CD14-positive monocyte (primary cell): ENCODE measurements at regions of chr17 and their contacts with region 1.

Region 1: DNA sequence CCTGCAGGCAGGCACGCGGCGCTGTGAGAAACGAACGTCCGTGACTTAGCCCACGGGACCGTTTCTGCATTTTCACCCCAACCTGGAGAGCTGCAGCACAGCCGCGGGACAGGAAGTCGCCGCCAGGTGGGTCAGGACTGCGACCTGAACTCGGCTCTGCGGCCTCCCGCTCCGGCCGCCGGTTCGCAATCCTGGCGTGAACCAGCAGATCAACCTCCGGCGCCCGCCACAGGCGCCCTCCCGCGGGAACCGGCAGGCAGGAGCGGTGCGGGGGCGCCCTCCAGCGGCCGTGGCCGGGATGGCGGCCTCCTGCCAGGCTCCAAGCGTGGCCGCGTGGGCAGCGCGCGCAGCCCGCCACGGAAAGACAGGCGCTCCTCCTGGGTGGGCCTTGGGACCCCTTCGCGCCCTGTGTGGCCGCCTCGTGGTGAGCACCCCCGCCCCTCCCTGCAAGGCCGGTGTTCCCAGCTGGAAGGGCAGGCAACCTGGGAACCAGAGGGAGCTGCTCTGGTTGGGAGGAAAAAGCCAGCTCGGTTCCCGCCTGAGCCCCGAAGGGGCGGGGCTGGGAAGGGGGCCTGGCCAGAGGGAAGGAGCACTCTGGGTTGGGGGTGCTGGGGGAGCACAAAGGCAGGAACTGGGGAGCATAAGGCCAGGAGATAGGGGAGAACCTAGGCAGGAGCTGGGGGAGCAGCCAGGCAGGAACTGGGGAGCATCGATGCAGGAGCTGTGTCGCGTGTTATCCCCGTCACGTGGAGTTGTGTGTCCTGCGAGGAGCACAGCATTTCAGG is 28.2 kb downstream of the ACTG1 start:
- DNase-seq: peak; percentile 72 to 78 (median 75)
- H3K4me3 ChIP-seq: peak overlapping the region; percentile 6 to 76 (median 11)
- H3K4me3 Mint-ChIP-seq: peak overlapping the region; percentile 62 to 64
- H3K27ac ChIP-seq: no peak overlapping the region
- H3K27ac Mint-ChIP-seq: no peak overlapping the region
- H3K4me1 ChIP-seq: peaks cover 50 to 69% of the 10 kb centered on the region in 2 donors
- H3K4me1 Mint-ChIP-seq: peaks cover 41% of the 10 kb centered on the region
- H3K27me3 ChIP-seq: peaks cover 0 to 30% of the 10 kb centered on the region in 2 donors
- H3K27me3 Mint-ChIP-seq: peaks cover 18 to 38% (median 24%) of the 10 kb centered on the region in 3 donors
- CTCF ChIP-seq: peak; percentile 98

Region 2: DNA sequence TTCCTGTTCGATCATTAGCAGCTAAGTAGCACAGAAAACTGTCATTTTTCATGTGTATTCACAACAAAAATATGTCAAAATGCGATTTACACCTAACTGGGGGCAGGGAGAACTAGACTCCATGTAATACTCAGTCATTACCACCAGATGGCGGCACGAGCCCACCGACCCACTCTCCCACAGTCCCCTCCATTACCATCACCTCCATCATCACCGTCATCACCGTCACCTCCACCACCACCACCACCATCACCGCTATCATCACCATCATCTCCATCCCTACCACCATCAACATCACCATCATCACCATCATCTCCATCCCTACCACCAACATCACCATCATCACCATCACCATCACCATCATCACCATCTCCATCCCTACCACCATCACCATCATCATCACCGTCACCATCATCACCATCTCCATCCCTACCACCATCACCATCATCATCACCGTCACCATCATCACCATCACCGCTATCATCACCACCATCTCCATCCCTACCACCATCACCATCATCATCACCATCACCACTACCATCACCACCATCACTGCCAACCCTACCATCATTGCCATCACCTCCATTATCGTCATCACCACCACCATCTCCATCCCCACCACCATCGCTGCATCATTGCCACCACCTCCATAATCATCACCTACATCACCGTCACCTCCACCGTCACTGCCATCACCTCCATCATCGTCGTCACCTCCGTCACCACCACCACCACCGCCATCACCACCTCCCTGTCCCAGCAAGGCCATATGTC is 230.8 kb before region 1 on chr17:
- intact Hi-C with region 1: loop called (anchors 1 kb)
- DNase-seq: peak; percentile 37 to 59 (median 57)
- H3K4me3 ChIP-seq: no peak overlapping the region
- H3K4me3 Mint-ChIP-seq: no peak overlapping the region
- H3K27ac ChIP-seq: no peak overlapping the region
- H3K27ac Mint-ChIP-seq: peak overlapping the region in 6 of 7 donors; percentile 2 to 75 (median 38)
- H3K4me1 ChIP-seq: peaks cover 18 to 22% of the 10 kb centered on the region in 2 donors
- H3K4me1 Mint-ChIP-seq: peaks cover 27% of the 10 kb centered on the region
- H3K27me3 ChIP-seq: no peaks in the 10 kb centered on the region
- H3K27me3 Mint-ChIP-seq: peaks cover 0 to 2% (median 0%) of the 10 kb centered on the region in 3 donors
- CTCF ChIP-seq: peak; percentile 86

Region 3: DNA sequence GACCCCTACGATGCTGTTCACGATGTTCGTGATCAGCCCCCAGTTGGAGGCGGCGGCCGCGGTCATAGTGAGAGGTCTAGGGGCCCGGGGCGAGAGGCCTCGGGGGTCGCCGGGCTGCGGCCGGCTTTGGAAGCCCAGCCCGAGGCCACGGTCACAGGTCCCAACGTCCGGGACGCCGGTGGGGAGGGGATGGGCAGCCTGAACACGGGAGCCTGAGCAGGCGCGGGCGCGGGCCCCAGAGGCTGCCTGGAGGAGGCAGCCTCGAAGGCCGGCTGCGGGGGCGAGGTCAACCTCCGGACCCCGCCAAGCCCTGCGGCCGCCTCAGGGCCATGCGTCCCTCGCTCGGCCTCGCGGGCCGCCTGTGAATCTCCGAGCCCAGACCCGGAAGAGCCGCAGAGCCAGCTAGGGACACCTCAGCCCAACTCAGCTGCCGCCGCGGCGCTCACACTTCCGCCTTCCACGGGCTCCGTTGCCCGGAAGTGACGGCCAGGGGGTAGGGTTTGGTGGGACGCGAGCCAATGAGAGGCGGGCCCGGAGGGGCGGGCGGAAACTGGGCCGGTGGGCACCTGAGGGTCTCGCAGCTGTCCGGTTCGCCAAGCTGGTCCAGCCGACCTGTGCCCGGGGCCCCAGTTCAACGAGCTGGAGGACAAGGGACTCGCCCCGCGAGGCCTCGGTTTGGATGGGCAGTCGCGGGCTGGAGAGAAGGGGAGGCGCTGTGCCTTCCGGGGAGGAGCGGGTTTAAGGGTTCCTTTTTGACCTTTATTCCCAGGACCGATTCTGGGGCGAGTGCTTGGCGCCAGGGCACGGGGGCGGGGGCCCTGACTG is 189.3 kb before region 1 on chr17 and contains the start of gene SLC38A10:
- intact Hi-C with region 1: loop called in 1 of 2 experiments (anchors 5 kb)
- DNase-seq: peak; percentile 92 to 93 (median 92)
- H3K4me3 ChIP-seq: peak within 1 kb of the TSS; percentile 64 to 95 (median 81)
- H3K4me3 Mint-ChIP-seq: peak within 1 kb of the TSS; percentile 93 to 96
- H3K27ac ChIP-seq: peak within 1 kb of the TSS; percentile 79 to 95
- H3K27ac Mint-ChIP-seq: peak within 1 kb of the TSS; percentile 97 to 99 (median 98)
- H3K4me1 ChIP-seq: peaks cover 54 to 59% of the 10 kb centered on the region in 2 donors
- H3K4me1 Mint-ChIP-seq: peaks cover 49% of the 10 kb centered on the region
- H3K27me3 ChIP-seq: no peaks in the 10 kb centered on the region
- H3K27me3 Mint-ChIP-seq: peaks cover 2 to 3% (median 2%) of the 10 kb centered on the region in 3 donors
- CTCF ChIP-seq: no peak
- polyA plus RNA-seq, gene SLC38A10: 50.8 to 76.1 (median 68.4) TPM

Region 4: DNA sequence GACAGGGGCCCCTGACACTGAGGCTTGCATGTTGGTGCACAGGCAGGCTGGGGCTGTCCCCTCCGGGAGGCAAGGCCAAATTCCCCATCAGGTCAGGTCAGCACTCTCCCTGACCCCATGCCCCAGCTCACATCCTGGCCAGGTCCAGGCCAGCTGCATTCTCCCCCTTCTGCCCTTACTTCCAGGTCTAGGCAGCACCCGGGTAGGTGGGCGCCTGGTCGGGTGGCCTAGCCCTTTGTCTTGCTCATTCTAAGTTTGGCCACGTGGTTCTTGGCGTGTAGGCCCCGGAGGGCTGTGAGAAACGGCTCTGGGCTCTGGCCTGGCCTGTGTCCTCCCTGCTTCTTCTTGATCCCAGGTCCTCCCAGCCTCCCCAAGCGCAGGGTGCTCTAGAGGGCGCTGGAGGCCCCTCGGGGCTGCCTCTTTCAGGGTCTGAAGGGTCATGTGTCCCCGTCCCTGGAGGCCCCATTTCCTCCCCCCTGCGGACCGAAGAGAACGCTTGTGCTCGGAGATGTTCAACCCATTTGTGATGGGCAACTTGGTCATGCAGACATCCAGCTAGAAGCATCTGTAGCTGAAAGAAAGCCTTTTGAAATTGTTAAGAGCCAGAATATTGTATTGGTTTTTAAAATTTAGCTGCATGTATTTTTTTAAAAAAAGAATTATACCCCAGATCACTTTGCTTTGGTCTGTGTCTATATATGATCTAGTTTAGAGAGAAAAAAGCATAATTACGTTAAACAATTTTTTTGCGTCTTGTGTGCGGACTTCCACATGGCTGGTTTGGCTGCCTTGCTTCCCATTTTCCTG is 82.5 kb before region 1 on chr17:
- intact Hi-C with region 1: loop called in 1 of 2 experiments (anchors 2 kb)
- DNase-seq: peak in 2 of 3 donors; percentile 47 to 64
- H3K4me3 ChIP-seq: peak overlapping the region in 1 of 3 experiments; percentile 93
- H3K4me3 Mint-ChIP-seq: peak overlapping the region; percentile 41 to 42
- H3K27ac ChIP-seq: no peak overlapping the region
- H3K27ac Mint-ChIP-seq: peak overlapping the region in 4 of 7 donors; percentile 24 to 86 (median 56)
- H3K4me1 ChIP-seq: peaks cover 42 to 56% of the 10 kb centered on the region in 2 donors
- H3K4me1 Mint-ChIP-seq: peaks cover 46% of the 10 kb centered on the region
- H3K27me3 ChIP-seq: no peaks in the 10 kb centered on the region
- H3K27me3 Mint-ChIP-seq: peaks cover 0 to 9% (median 2%) of the 10 kb centered on the region in 3 donors
- CTCF ChIP-seq: no peak

Region 5: GRCh38 chr17:81453712-81454111 is 30.7 kb before region 1 on chr17:
- intact Hi-C with region 1: no loop called
- DNase-seq: peak in 1 of 3 donors; percentile 25
- H3K4me3 ChIP-seq: no peak overlapping the region
- H3K4me3 Mint-ChIP-seq: no peak overlapping the region
- H3K27ac ChIP-seq: no peak overlapping the region
- H3K27ac Mint-ChIP-seq: peak overlapping the region in 1 of 7 donors; percentile 20
- H3K4me1 ChIP-seq: peaks cover 32 to 36% of the 10 kb centered on the region in 2 donors
- H3K4me1 Mint-ChIP-seq: peaks cover 37% of the 10 kb centered on the region
- H3K27me3 ChIP-seq: no peaks in the 10 kb centered on the region
- H3K27me3 Mint-ChIP-seq: no peaks in the 10 kb centered on the region
- CTCF ChIP-seq: no peak

Region 6: GRCh38 chr17:81512560-81513371 is 28.4 kb after region 1 on chr17 and contains the start of gene ACTG1:
- intact Hi-C with region 1: loop called in 1 of 2 experiments (anchors 2 kb)
- DNase-seq: peak; percentile 81 to 91 (median 90)
- H3K4me3 ChIP-seq: peak within 1 kb of the TSS; percentile 75 to 94 (median 83)
- H3K4me3 Mint-ChIP-seq: peak within 1 kb of the TSS; percentile 95 to 96
- H3K27ac ChIP-seq: peak within 1 kb of the TSS; percentile 84 to 89
- H3K27ac Mint-ChIP-seq: peak within 1 kb of the TSS; percentile 83 to 95 (median 90)
- H3K4me1 ChIP-seq: peaks cover 65 to 84% of the 10 kb centered on the region in 2 donors
- H3K4me1 Mint-ChIP-seq: peaks cover 64% of the 10 kb centered on the region
- H3K27me3 ChIP-seq: no peaks in the 10 kb centered on the region
- H3K27me3 Mint-ChIP-seq: peaks cover 0 to under 1% (median under 1%) of the 10 kb centered on the region in 3 donors
- CTCF ChIP-seq: no peak
- polyA plus RNA-seq, gene ACTG1: 1,133 to 3,195 (median 1,620) TPM